ENCODE measurements at regions of chr1 and their contacts with region 1.

Region 1: GRCh38 chr1:186102557-186103148 is 272.4 kb downstream of the TPR start:
- DNase-seq: no peak

Region 2: DNA sequence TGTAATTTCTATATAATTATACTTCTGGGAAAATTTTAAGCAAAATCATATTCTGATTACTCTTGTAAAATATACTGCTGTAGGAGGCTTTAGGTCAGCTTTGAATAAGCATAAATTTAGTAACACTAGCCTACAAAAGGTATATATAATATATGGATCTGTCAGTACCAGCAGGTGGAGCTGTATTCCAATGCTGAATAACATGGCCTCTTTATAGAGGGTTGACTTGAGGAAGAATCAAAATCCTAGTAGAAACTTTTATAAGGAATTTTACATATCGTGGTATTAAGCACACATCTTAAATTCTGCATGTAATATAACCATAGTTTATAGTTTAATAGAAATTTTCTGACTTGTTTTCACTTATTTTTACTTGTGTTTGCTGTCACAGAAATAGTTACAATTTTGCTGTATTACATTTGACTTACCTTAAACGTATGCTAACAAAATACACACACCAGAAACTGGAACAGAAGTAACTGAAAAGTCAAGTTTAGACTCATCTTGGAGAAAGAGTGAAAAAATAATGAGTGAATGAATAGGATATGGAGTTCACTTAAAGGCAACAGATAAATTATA is 289.2 kb before region 1 on chr1:
- intact Hi-C with region 1: loop called (anchors 10 kb)
- DNase-seq: no peak

Region 3: GRCh38 chr1:185987611-185988321 is 114.9 kb before region 1 on chr1:
- intact Hi-C with region 1: loop called (anchors 5 kb)
- DNase-seq: no peak

Region 4: GRCh38 chr1:186027621-186028020 is 75.0 kb before region 1 on chr1:
- intact Hi-C with region 1: loop called (anchors 2 kb)
- DNase-seq: no peak

Region 5: GRCh38 chr1:186700712-186701111 is 598.1 kb after region 1 on chr1:
- intact Hi-C with region 1: no loop called
- DNase-seq: no peak